Posterior vena cava (tissue), 2 donors: ENCODE measurements at regions of chr5 and their contacts with region 1.

Region 1: GRCh38 chr5:121088341-121088740 is 624.2 kb downstream of the PRR16 start:
- DNase-seq: no peak

Region 2: GRCh38 chr5:119478781-119479180 is 1609.6 kb before region 1 on chr5:
- intact Hi-C with region 1: no loop called
- DNase-seq: no peak

Region 3: GRCh38 chr5:120717381-120717780 is 371.0 kb before region 1 on chr5:
- intact Hi-C with region 1: no loop called
- DNase-seq: no peak

Region 4: DNA sequence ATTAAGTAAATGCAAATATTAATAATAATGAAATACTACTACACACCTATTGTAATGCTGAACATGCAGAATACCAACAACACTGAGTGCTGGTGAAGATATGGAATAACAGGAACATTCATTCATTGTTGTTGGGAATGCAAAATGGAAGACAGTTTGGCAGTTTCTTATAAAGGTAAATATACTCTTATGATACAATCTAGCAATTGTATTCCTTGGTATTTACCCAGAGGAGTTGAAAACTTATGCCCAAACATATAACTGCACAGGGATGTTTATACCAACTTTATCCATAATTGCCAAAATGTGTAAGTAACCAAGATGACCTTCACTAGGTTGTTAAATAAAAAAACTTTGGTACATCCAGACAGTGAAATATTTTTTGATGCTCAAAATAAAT is 12.6 kb after region 1 on chr5:
- intact Hi-C with region 1: loop called in 1 of 2 experiments (anchors 2 kb)
- DNase-seq: no peak